HEK293 (cell line): ENCODE measurements at regions of chr6 and their contacts with region 1.

Region 1: DNA sequence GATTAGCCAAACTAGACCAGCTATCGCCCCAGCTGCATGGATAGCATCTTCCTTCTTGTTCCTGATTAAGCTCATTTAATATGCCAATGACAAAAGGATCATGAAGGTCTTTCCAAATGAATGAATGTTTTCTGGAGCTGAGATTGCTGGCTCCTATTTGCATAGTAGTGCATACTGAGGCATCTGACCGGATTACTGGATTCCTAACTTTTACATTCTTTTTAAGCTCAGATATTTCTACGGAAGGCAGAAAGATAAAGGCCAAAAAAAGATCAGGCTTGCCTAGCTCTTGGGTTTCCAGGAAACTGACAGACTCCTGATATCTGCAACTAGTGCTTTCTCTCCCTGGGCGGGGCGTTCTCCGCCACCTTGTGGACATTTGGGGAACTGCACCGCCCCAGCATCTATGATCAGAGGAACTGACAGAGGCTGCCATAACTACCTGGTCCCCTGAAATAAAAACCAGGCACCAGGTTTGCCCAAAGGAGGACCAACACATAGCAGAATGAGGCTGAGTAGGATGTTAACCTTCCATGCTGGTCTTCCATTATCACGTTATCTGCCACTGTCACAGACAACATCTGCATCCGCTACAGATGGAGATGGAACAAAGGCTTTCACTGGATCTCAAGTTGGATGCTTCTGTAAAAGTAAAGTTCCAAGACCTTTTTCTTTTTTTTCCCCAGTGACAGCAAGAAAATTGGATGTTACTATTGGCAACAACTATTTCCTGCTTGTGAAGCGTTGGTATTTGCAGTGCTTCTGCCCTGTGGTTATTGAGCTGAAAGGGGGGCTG is 33.2 kb downstream of the NT5E start:
- H3K4me3 ChIP-seq: no peak overlapping the region
- H3K27ac ChIP-seq: no peak overlapping the region
- H3K4me1 ChIP-seq: no peaks in the 10 kb centered on the region
- CTCF ChIP-seq: peak; percentile 76

Region 2: DNA sequence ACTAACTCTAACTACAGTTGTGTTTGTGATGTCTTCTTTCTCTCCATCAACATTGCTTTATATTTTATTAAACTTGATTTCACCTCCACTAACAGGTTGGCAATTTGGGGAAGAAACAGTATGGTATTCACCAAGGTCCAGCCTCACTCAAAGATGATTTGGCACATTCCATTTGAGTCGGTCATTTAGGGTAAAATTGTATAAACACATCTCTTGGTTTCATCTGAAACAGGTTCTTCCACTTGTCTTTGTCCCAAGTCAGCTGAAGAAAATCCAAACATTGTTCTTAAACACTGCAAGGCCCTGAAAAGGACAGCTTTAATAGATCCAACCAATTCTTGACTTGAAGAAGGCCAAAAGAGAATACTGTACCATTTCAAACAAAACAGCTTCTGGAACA is 138.1 kb before region 1 on chr6:
- CTCF ChIA-PET with region 1: interaction called, 179 read pairs
- POLR2A ChIA-PET with region 1: no interaction called
- H3K4me3 ChIP-seq: no peak overlapping the region
- H3K27ac ChIP-seq: no peak overlapping the region
- H3K4me1 ChIP-seq: no peaks in the 10 kb centered on the region
- CTCF ChIP-seq: no peak

Region 3: GRCh38 chr6:85360794-85361642 is 122.1 kb before region 1 on chr6:
- CTCF ChIA-PET with region 1: interaction called, 179 read pairs
- POLR2A ChIA-PET with region 1: no interaction called
- H3K4me3 ChIP-seq: no peak overlapping the region
- H3K27ac ChIP-seq: 0 out of 2 replicates have a peak overlapping the region, but pooled peaks have one; percentile 16
- H3K4me1 ChIP-seq: no peaks in the 10 kb centered on the region
- CTCF ChIP-seq: no peak

Region 4: DNA sequence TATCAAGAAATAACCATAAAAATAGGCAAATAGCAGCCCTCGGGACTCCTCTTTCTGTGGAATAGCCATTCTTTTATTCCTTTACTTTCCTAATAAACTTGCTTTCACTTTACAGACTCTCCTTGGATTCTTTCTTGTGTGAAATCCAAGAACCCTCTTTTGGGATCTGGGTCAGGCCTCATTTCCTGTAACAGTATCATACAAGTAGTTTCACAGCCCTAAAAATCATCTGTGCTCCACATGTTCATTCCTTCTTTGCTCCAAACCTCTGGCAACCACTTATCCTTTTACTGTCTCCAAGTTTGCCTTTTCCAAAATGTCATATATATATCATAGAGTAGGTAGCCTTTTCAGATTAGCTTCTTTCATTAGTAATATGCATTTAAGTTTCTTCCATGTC is 46.7 kb before region 1 on chr6:
- CTCF ChIA-PET with region 1: interaction called, 10 read pairs
- POLR2A ChIA-PET with region 1: no interaction called
- H3K4me3 ChIP-seq: no peak overlapping the region
- H3K27ac ChIP-seq: no peak overlapping the region
- H3K4me1 ChIP-seq: no peaks in the 10 kb centered on the region
- CTCF ChIP-seq: no peak

Region 5: DNA sequence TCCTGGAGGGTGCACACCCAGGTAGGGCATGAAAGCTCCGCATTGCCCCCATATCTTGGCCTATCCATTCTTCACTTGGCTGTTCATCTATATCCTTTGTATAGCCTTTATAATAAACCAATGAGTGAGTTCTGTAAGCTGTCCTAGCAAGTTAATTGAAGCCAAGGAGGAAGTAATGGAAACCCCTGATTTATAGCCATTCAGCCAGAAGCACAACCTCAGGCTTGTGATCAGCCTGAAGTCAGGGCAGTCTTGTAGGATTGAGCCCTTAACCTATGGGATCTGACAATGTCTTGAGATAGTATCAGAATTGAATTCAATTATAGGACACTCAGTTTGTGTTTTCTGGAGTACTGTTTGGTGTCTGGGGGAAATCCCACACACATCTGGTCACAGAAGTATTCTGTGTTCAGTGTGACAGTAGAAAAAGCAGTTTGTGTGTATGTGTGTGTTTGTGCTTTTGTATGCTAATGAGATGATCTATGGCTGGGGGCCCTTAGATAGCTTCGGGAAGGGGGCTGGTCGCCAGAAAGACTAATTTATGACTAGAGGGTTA is 27.6 kb before region 1 on chr6:
- CTCF ChIA-PET with region 1: interaction called, 39 read pairs
- POLR2A ChIA-PET with region 1: no interaction called
- H3K4me3 ChIP-seq: no peak overlapping the region
- H3K27ac ChIP-seq: no peak overlapping the region
- H3K4me1 ChIP-seq: peaks cover 15% of the 10 kb centered on the region
- CTCF ChIP-seq: no peak

Region 6: DNA sequence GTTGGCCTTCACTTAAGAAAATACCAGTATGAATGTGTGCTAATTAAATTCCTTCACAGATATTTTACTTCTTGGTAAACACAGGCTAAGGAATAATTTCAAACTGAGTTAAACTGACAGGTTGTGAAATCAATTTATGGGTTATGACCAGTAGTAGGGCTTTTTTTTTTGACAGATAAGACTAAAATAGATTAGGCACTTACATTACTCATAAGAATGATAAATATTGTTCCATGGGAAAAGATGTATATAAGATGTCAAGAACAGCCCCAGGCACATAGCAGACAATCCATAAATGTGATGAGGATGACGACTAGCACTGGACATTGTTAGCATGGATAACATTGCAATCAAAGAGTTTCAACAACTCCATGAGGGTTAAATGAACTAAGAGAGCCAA is 10.4 kb before region 1 on chr6:
- CTCF ChIA-PET with region 1: interaction called, 58 read pairs
- POLR2A ChIA-PET with region 1: no interaction called
- H3K4me3 ChIP-seq: no peak overlapping the region
- H3K27ac ChIP-seq: no peak overlapping the region
- H3K4me1 ChIP-seq: no peaks in the 10 kb centered on the region
- CTCF ChIP-seq: no peak

Region 7: DNA sequence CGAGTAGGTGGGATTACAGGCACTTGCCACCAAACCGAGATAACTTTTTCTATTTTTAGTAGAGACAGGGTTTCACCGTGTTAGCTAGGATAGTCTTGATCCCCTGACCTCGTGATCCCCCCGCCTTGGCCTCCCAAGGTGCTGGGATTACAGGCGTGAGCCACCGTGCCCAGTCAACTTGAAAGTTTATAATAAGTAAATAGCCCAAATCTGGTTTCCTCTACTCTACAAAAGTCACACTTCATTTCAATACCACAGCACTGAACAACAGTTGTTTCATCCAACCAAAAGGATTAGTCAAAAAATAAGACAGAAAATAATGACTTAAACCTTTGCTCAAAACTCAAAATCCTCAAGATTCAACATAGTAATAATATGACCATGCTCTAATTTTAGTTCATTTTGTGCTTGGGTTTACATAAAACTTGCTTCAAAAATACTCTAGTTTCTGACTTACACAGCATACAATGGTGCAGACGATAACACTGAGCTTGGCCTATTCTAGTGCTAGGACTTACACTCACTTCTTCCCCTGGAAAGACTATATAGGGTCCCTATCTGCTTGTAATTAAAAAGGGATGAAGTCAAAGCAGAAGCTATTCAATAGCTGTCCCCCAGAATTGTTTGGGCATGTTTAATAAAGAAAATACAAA is 23.5 kb after region 1 on chr6:
- CTCF ChIA-PET with region 1: interaction called, 13 read pairs
- POLR2A ChIA-PET with region 1: no interaction called
- H3K4me3 ChIP-seq: no peak overlapping the region
- H3K27ac ChIP-seq: no peak overlapping the region
- H3K4me1 ChIP-seq: no peaks in the 10 kb centered on the region
- CTCF ChIP-seq: no peak

Region 8: DNA sequence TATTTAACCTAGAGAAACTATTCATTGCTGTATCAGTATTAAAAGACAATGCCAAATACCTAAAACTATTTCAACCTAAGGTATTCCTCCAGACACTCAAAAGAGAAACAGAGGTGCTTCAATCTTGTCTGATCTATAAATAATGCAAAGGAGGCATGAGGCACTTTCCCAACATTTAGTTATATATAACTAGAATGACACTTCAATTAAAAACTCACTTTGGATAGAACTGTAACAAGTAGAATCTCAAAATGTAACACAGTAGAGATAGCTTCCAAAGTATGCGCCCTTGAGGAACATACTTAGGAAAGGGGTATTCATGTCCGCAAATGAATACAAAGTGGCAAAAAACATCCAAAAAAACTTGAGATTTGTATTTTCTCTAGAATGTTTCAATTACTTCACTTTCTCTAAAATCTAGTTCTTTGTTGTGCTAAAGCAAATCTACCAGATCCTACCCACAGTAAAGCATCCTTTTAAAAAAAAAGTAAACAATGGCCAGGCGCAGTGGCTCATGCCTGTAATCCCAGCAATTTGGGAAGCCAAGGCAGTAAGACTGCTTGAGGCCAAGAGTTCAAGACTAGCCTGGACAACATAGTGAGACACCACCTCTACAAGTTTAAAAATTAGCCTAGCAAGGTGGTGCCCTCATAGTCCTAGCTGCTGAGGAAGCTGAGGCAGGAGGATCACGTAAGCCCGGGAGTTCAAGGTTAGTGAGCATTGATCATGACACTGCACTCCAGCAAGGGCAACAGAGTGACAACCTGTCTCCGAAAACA is 149.2 kb after region 1 on chr6:
- CTCF ChIA-PET with region 1: no interaction called
- POLR2A ChIA-PET with region 1: no interaction called
- H3K4me3 ChIP-seq: no peak overlapping the region
- H3K27ac ChIP-seq: no peak overlapping the region
- H3K4me1 ChIP-seq: no peaks in the 10 kb centered on the region
- CTCF ChIP-seq: no peak